ENCODE measurements at regions of chr5 and their contacts with region 1.

Region 1: GRCh38 chr5:150399524-150400211 is 13.0 kb downstream of the CD74 start:
- DNase-seq: no peak

Region 2: GRCh38 chr5:150361301-150361700 is 38.4 kb before region 1 on chr5:
- in situ Hi-C with region 1: loop called (anchors 5 kb)
- DNase-seq: no peak

Region 3: DNA sequence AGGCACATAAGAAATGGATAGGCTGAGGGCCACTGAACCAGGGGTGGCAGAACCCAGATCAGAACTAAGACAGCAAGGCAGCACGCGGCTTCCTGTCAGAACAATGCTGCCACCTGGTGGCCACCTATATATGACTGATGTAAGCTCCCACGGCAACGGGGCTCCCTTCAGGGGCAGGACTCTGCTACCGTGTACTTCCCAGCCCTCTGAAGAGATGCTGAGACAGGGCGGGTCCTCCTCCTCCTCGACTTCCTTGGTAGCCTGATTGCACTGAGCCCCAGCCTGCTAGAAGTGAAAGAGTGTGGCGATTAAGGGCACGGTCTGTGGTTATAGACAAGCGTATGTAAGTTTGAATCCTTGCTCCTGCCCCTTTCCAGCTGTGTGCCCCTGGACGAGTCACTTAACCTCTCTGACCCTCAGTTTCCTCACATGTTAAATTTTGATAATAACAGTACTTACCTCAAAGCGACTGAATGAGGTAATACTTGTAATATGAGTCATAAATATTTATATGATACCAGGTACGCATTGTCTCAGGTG is 36.5 kb after region 1 on chr5:
- in situ Hi-C with region 1: no loop called
- DNase-seq: peak; percentile 91

Region 4: GRCh38 chr5:150758531-150759333 is 359.1 kb after region 1 on chr5 and contains the start of gene DCTN4:
- in situ Hi-C with region 1: no loop called
- DNase-seq: peak; percentile 100
- total RNA-seq, gene DCTN4: 31.0 and 47.0 TPM in 2 replicates